Esophagus squamous epithelium (tissue), 5 donors: ENCODE measurements at regions of chr19 and their contacts with region 1.

Region 1: DNA sequence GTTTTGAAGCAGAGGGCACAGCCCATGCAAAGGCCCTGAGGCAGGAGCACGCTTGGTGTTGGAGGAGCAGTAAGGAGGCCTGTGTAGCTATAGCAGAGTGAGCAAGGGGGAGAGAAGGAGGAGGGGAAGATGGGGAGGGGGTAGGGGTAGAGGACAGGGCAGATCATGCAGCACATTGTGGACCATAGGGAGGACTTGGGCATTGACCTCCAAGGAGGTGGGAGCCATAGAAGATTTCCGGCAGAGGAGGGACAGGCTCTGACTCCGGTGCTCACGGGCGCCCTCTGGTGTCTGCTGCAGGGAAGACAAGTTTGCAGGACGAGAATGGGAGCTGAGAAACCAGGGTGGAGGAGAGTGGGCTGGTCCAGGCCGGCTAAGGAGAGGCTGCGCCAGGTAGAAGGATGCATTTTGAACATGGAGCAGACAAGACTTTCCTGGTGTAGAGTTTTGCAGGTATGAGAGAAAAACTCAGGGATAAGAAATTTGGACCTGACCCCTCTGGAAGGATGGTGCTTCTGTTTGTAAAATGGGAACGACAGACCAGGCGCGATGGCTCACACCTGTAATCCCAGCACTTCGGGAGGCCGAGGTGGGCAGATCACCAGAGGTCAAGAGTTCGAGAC is 13.7 kb upstream of the CREB3L3 start:
- DNase-seq: no peak
- H3K4me3 ChIP-seq: no peak overlapping the region
- H3K27ac ChIP-seq: no peak overlapping the region
- H3K4me1 ChIP-seq: peaks cover 0 to 13% (median 6%) of the 10 kb centered on the region in 3 donors
- H3K27me3 ChIP-seq: peaks cover 0 to 1% (median 0%) of the 10 kb centered on the region in 4 donors
- CTCF ChIP-seq: peak; percentile 71 to 85 (median 79)
- POLR2A ChIP-seq: no peak

Region 2: DNA sequence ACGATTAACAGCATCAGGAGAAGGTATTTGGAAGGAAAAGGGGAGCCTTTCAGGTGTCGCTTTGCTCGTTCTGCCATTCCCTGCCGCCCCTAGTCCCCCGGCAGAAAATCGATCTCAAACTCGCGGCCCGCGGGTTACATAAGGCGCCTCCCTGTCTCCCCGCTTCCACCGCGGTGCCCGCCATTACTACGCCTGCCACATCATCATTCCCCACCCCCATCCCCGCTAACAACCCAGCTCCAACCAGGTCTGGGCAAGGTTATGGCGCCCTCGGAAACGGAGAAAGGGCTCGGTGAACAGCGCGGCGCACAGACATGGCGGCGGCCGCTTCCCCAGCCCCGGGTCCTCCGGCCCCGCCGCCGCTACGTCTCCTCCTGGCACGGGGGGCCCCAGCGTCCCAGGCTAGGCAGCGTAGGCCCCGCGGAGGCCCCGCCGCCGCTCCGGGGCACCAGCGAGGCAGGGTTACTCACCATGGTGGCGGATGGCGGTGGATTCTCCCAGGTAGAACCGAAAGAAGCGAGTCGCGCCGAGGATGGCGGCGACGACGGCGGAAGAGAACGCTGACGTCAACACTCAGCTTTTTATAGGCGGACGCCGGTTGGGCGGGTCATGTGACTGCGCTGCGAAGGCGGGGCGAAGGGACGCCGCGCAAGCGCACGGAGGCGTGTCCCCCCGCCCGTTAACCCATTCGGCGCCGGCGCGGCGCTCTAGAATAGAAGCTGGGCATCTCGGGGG is 154.7 kb before region 1 on chr19 and contains the start of gene EEF2:
- intact Hi-C with region 1: loop called (anchors 10 kb)
- DNase-seq: peak; percentile 35
- H3K4me3 ChIP-seq: peak within 1 kb of the TSS; percentile 73 to 89 (median 87)
- H3K27ac ChIP-seq: peak within 1 kb of the TSS; percentile 92 to 97 (median 96)
- H3K4me1 ChIP-seq: peaks cover 40 to 87% (median 43%) of the 10 kb centered on the region in 3 donors
- H3K27me3 ChIP-seq: no peaks in the 10 kb centered on the region
- CTCF ChIP-seq: peak in 2 of 6 experiments; percentile 23 to 44
- POLR2A ChIP-seq: peak; percentile 94 to 100 (median 100)
- total RNA-seq, gene EEF2: 1,210 to 2,054 (median 1,565) TPM

Region 3: DNA sequence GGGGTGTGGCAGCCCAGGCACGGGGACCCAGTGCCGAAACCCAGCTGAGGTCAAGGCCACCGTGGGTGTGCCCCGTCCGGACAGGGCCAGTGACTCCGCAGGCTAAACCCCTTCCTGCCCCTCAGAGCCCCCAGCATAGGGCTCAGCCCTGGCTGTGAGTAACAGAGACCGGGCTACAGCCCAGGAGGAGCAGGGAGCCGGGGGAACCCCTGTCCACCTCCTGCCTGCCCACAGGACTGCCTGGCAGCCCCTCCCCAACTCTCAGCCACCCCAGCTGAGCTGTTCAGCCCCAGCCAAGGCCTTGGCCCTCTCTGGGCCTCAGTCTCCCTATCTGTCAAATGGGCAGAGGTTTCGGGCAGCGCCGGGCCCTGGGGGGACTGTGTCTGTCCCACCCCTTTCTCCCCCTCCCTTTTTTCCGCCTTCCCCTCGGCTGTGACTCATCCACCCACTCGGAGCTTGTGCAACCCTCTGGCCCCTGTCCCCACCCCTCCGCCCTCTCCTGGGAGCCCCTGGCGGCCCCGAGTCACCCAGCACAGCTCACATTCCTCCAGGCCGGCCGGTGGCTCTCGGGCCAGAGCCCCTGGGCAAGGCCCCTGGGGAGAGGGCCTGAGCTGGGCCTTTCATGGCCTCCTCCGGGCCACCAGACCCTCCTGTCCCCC is 81.6 kb before region 1 on chr19:
- intact Hi-C with region 1: loop called (anchors 10 kb)
- DNase-seq: no peak
- H3K4me3 ChIP-seq: peak overlapping the region; percentile 22 to 100 (median 99)
- H3K27ac ChIP-seq: peak overlapping the region; percentile 97 to 99 (median 98)
- H3K4me1 ChIP-seq: peaks cover 66 to 97% (median 72%) of the 10 kb centered on the region in 3 donors
- H3K27me3 ChIP-seq: no peaks in the 10 kb centered on the region
- CTCF ChIP-seq: peak in 3 of 6 experiments; percentile 16 to 29 (median 28)
- POLR2A ChIP-seq: peak in 2 of 4 donors; percentile 60 to 63

Region 4: DNA sequence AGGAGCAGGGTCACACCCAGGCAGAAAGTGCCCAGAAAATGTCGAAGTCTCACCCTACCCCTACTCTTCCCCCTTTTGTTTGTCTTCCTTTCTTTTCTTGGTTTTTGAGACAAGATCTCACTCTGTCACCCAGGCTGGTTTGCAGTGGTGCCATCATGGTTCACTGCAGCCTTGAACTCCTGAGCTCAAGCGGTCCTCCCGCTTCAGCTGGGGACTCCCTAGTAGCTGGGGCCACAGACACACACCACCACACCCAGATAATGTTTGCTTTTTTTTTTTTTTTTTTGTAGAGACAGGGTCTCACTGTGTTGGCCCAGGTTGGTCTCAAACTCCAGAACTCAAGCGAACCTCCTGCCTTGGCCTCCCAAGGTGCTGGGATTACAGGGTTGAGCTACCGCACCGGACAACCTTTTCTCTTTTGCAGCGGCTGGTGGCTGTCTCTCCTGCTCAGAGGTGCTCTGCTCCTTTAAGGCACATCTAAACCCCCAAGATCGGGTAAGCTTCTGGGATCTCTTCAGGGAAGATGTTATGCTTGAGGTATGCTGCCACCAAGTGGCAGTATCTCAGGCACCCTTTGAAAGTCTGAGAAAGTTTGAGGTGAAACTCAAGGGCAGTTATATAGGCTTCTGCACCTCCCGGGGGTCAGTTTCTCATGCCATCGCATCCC is 67.2 kb after region 1 on chr19:
- intact Hi-C with region 1: no loop called
- DNase-seq: no peak
- H3K4me3 ChIP-seq: no peak overlapping the region
- H3K27ac ChIP-seq: no peak overlapping the region
- H3K4me1 ChIP-seq: peaks cover 0 to 14% (median 0%) of the 10 kb centered on the region in 3 donors
- H3K27me3 ChIP-seq: peaks cover 0 to 45% (median 0%) of the 10 kb centered on the region in 4 donors
- CTCF ChIP-seq: peak in 1 of 6 experiments; percentile 9
- POLR2A ChIP-seq: no peak